HCT116 (cell line): ENCODE measurements at regions of chr3 and their contacts with region 1.

Region 1: GRCh38 chr3:184777336-184778004 is 34.5 kb upstream of the VPS8 start:
- DNase-seq: peak; percentile 91
- ATAC-seq: peak; percentile 97
- H3K4me3 ChIP-seq: no peak overlapping the region
- H3K27ac ChIP-seq: no peak overlapping the region
- H3K4me1 ChIP-seq: peaks cover 0 to 5% of the 10 kb centered on the region in 2 experiments; a peak in 1 of 4 replicates
- H3K27me3 ChIP-seq: 0 out of 2 replicates have a peak, but pooled peaks cover 6% of the 10 kb centered on the region
- CTCF ChIP-seq: peak; percentile 64 to 98 (median 83)
- POLR2A ChIP-seq: no peak
- RAD21 ChIP-seq: peak; percentile 99

Region 2: DNA sequence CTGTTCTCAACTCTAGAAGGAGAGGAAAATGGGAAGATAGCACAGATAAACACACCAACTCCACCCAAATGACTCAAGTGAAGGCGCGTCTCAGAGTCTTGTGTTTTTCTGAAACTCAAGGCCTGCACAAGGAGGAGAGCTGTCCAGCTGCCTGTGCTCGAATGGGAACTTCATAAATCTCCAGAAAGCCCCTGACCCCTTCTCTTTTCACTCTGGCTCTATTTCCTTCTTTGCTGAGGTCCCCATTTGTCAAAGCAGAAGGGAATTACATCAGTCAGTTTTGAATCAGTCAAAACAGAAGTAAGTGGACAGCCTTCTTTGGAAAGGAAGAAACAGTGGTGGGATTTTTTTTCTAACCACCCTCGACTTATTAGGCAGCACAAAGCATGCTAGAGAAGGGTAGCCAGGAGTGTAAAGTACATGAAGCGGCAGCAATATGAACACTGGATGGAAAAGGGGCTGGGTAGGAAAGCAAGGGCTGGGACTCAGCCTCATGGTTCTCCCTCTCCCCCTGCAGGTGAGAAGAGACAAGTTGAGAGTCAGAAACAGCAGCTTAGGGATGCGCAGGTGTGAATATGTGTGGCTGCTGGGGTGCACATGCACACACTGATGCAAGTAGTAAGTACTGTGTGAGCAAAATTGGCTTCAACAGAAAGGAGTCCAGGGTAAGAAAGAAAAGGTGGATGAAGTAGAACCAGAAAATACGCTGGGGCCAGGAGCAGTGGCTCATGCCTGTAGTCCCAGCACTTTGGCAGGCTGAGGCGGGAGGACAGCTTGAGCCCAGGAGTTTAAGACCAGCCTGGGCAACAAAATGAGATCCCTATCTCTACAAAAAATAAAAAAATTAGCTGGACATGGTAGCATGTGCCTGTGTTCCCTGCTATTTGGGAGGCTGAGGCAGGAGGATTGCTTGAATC is 29.0 kb before region 1 on chr3:
- CTCF ChIA-PET with region 1: interaction called, 4 read pairs
- POLR2A ChIA-PET with region 1: no interaction called
- RAD21 ChIA-PET with region 1: no interaction called
- intact Hi-C with region 1: loop called (anchors 1 kb)
- DNase-seq: peak; percentile 48
- ATAC-seq: peak; percentile 99
- H3K4me3 ChIP-seq: no peak overlapping the region
- H3K27ac ChIP-seq: no peak overlapping the region
- H3K4me1 ChIP-seq: peaks cover 0 to 7% of the 10 kb centered on the region in 2 experiments; a peak in 2 of 4 replicates
- H3K27me3 ChIP-seq: no peaks in the 10 kb centered on the region
- CTCF ChIP-seq: peak; percentile 64 to 88 (median 71)
- POLR2A ChIP-seq: no peak
- RAD21 ChIP-seq: peak; percentile 89